Gastrocnemius medialis (tissue), 4 donors: ENCODE measurements at regions of chr1 and their contacts with region 1.

Region 1: GRCh38 chr1:202462342-202463076 is 114.0 kb downstream of the PPP1R12B start:
- DNase-seq: no peak
- ATAC-seq: no peak
- H3K4me3 ChIP-seq: no peak overlapping the region
- H3K27ac ChIP-seq: peak overlapping the region; percentile 77 to 81 (median 79)
- H3K4me1 ChIP-seq: peaks cover 69 to 83% of the 10 kb centered on the region in 2 donors
- H3K27me3 ChIP-seq: no peaks in the 10 kb centered on the region
- CTCF ChIP-seq: no peak
- POLR2A ChIP-seq: no peak

Region 2: DNA sequence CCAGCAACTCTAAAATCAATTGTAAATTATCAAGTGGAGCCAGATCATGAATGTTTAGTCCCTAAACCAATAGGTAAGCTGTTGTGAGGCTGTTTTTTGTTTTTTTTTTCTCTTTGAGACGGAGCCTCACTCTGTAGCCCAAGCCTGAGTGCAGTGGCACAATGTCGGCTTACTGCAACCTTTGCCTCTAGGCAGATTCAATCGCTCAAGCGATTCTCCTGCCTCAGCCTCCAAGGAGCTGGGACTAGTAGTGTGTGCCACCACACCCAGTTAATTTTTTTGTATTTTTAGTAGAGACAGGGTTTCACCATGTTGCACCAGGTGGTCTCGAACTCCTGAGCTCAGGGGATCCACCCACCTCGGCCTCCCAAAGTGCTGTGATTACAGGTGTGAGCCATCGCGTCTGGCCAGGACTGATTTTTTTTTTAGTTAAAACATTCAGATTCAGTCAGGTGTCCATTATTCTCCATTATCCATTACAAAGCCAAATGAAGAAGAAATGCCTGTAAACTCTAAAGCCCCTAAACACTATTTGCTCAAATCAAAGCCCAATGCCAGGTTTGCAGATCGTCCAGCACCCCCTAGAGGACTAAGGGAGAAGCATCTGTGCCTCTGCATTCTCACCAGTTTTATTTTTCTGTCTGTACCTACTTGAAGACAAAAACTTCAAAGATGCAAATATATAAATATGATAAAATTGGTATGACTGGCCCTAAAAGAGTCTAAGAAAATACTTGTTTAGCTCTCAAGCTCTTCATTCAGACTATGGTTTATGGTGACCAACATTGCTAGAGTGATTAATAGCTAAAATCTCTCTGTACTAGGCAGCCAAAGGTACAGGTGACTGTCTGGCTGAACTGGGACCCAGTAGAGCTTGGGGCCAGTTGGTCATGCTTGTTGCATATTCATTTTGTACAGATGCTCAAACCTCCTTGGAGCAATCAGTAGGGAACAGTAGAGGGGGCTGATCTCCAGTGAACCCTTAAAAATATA is 109.1 kb after region 1 on chr1:
- in situ Hi-C with region 1: no loop called
- intact Hi-C with region 1: loop called (anchors 10 kb)
- DNase-seq: no peak
- ATAC-seq: peak in 1 of 2 donors; percentile 17
- H3K4me3 ChIP-seq: no peak overlapping the region
- H3K27ac ChIP-seq: peak overlapping the region in 2 of 4 donors; percentile 2 to 6
- H3K4me1 ChIP-seq: peaks cover 21 to 55% of the 10 kb centered on the region in 2 donors
- H3K27me3 ChIP-seq: no peaks in the 10 kb centered on the region
- CTCF ChIP-seq: peak; percentile 33 to 70 (median 58)
- POLR2A ChIP-seq: no peak

Region 3: GRCh38 chr1:202605515-202605914 is 143.0 kb after region 1 on chr1:
- in situ Hi-C with region 1: no loop called
- intact Hi-C with region 1: no loop called
- DNase-seq: no peak
- ATAC-seq: no peak
- H3K4me3 ChIP-seq: no peak overlapping the region
- H3K27ac ChIP-seq: no peak overlapping the region
- H3K4me1 ChIP-seq: no peaks in the 10 kb centered on the region
- H3K27me3 ChIP-seq: no peaks in the 10 kb centered on the region
- CTCF ChIP-seq: no peak
- POLR2A ChIP-seq: no peak

Region 4: DNA sequence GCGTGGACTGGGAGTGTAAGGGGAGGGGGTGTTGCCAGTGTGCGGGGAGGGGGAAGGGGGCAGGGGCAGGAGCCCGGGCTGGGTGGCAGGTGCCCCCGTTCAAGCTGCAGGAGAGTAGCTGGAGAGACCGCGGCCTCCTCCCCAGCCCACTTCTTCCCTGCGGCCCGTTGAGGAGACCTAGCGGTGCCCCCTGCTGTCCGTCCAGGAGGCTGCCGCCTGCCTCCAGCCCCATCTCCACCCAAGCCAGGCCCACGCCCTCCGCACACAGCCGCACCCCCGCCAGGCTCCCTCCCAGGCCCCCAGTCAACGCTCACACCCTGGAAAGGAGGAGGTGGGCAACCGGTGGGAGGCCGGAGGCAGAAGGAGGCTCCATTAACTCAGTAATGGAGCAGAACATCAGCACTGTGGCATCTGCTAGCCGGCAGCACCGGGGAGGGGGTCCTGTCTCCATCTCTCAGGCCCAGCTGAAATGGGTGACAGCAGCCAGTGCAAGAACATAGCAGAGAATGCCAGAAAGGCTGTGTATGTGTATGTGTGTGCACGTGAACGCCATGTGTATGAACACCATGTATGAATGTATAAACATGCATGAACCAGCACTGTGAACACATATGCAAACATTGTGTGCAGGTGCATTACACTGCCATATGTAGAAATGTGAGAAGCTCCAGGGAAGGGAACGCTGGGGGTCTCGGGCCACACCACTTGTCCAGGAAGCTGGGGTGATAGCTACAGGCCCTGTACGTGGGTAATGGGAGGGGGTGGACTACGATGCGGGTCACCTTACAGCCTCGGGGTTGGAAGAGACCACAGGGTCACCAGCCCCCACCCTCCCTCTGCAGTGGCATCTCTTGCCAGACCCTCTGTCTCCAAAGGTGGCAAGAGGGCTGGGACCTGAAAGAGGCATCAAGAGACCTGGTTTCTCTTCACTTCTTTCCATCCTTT is 163.2 kb after region 1 on chr1:
- in situ Hi-C with region 1: no loop called
- intact Hi-C with region 1: loop called (anchors 10 kb)
- DNase-seq: peak; percentile 45 to 61
- ATAC-seq: peak; percentile 22 to 67
- H3K4me3 ChIP-seq: no peak overlapping the region
- H3K27ac ChIP-seq: no peak overlapping the region
- H3K4me1 ChIP-seq: peaks cover 22 to 34% of the 10 kb centered on the region in 2 donors
- H3K27me3 ChIP-seq: peaks cover 0 to 4% (median 3%) of the 10 kb centered on the region in 3 donors
- CTCF ChIP-seq: peak; percentile 60 to 78 (median 69)
- POLR2A ChIP-seq: no peak